ENCODE measurements at regions of chr5 and their contacts with region 1.

Region 1: GRCh38 chr5:73498057-73499008 is at the start of gene BTF3:
- DNase-seq: peak; percentile 93 to 97
- H3K4me3 ChIP-seq: peak within 1 kb of the TSS; percentile 91
- H3K27ac ChIP-seq: peak within 1 kb of the TSS; percentile 82
- H3K4me1 ChIP-seq: peaks cover 38% of the 10 kb centered on the region
- H3K27me3 ChIP-seq: no peaks in the 10 kb centered on the region
- CTCF ChIP-seq: no peak
- total RNA-seq, gene BTF3: 635 and 694 TPM in 2 replicates

Region 2: GRCh38 chr5:72920690-72921502 is 577.4 kb before region 1 on chr5:
- CTCF ChIA-PET with region 1: no interaction called
- POLR2A ChIA-PET with region 1: no interaction called
- intact Hi-C with region 1: loop called (anchors 5 kb)
- DNase-seq: peak in 1 of 2 experiments; percentile 52
- H3K4me3 ChIP-seq: no peak overlapping the region
- H3K27ac ChIP-seq: no peak overlapping the region
- H3K4me1 ChIP-seq: no peaks in the 10 kb centered on the region
- H3K27me3 ChIP-seq: no peaks in the 10 kb centered on the region
- CTCF ChIP-seq: peak; percentile 69